ENCODE measurements at regions of chr9 and their contacts with region 1.

Region 1: GRCh38 chr9:35696525-35697215 is 6.9 kb upstream of the TPM2 start:
- DNase-seq: peak; percentile 66
- H3K4me3 Mint-ChIP-seq: no peak overlapping the region
- H3K27ac Mint-ChIP-seq: peak overlapping the region; percentile 50
- H3K4me1 Mint-ChIP-seq: peaks cover 4% of the 10 kb centered on the region
- H3K27me3 Mint-ChIP-seq: no peaks in the 10 kb centered on the region

Region 2: DNA sequence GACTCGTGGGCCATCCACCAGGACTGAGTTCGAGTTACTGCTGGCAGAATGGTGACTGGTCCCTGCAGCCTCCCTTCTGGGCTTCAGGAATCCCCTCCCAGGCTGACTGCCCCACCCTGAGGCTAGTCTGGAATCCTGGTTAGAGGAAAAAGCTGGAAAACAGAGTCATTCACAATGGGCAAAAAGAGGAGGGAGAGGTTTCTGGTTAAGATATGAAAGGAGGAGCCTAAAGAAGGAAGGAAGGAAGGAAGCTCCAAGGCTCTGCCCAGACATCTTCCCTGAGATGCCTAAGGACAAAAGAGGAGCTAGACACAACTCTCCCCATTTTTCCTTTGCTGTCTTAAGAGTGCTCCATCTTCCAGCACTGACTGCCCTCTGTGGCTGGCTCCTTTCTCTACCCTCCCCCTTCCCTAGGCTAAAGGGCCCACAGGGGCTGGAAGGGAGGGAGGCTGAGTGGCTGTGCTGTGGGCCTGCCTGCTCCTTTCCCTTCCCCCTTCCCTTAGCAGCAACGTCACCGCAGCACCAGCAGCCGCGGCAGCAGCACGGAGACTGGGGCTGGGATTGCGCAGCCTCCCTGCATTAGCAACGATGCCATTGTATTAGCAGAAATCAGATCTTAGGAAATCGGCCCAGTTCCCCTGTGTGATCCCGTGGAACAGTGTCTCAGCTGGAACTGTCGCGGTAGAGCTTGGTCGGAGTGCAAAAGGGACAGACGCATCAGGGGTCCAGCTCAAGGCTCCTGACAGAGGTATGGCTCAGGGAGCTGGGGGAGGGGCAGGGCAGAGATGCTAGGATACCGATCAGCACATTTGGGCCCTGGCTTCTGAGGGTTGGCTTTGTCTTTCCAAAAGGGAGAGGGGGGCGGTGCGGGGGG is 158.1 kb before region 1 on chr9:
- CTCF ChIA-PET with region 1: no interaction called
- DNase-seq: no peak
- H3K4me3 Mint-ChIP-seq: no peak overlapping the region
- H3K27ac Mint-ChIP-seq: no peak overlapping the region
- H3K4me1 Mint-ChIP-seq: no peaks in the 10 kb centered on the region
- H3K27me3 Mint-ChIP-seq: peaks cover 7% of the 10 kb centered on the region

Region 3: GRCh38 chr9:35616681-35617459 is 79.8 kb before region 1 on chr9:
- CTCF ChIA-PET with region 1: interaction called, 17 read pairs
- DNase-seq: peak; percentile 79
- H3K4me3 Mint-ChIP-seq: peak overlapping the region; percentile 80
- H3K27ac Mint-ChIP-seq: peak overlapping the region; percentile 79
- H3K4me1 Mint-ChIP-seq: peaks cover 49% of the 10 kb centered on the region
- H3K27me3 Mint-ChIP-seq: peaks cover 27% of the 10 kb centered on the region

Region 4: GRCh38 chr9:35657546-35658136 is 39.0 kb before region 1 on chr9 and contains the start of gene RMRP:
- CTCF ChIA-PET with region 1: interaction called, 96 read pairs
- DNase-seq: peak; percentile 91
- H3K4me3 Mint-ChIP-seq: peak within 1 kb of the TSS; percentile 81
- H3K27ac Mint-ChIP-seq: peak within 1 kb of the TSS; percentile 96
- H3K4me1 Mint-ChIP-seq: peaks cover 69% of the 10 kb centered on the region
- H3K27me3 Mint-ChIP-seq: peaks cover 18% of the 10 kb centered on the region

Region 5: DNA sequence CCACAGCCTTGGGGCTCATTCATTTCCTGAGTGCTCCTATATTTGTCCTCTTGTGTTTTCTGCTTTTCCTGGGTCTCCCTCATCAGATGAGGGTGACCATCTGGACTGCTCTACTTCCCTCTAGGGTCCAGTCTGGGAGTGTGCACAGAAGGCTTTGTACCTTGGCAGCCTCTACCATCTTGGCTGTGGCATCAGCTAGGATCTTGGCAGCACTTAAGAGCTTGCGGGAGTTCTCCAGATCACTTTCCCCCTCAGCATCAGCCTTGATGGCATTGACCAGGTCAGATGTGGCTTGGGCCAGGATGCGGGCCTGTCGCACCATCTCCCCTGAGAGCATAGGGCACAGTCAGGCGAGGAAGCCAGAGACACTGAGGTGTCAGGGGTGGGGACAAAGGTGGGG is 19.6 kb after region 1 on chr9:
- CTCF ChIA-PET with region 1: interaction called, 31 read pairs
- DNase-seq: no peak
- H3K4me3 Mint-ChIP-seq: no peak overlapping the region
- H3K27ac Mint-ChIP-seq: peak overlapping the region; percentile 47
- H3K4me1 Mint-ChIP-seq: no peaks in the 10 kb centered on the region
- H3K27me3 Mint-ChIP-seq: no peaks in the 10 kb centered on the region

Region 6: DNA sequence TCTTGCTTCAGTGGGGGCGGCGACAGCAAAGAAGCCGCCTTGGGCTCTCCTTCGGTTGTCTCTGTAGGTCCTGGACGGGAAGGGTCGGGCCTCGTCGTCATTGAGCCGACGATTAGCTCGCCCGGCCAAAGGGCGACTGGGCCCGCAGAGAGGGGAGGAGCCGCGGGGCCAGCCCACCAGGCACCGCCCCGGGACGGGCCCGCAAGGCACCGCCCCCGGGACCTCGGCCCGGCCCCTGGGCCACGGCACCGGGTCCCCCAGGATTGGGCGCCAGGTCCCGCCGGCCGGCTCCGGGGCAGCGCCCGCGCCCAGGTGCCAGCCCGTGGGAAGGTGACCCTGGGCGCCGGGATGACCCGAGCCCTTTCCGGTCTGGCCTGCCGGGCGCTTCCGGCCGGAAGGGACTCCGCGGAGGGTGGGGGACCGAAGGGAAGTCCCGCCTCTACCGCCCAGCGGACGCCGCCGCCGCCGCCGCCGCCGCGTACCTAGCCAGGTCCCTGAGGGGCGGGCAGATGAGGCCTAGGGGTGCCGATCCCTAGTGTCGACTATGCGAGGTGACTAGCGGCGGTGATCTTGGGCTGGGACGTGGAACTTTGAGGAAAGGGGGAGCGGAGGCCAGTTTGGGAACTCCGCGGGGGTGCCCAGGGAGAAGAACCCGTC is 52.3 kb after region 1 on chr9 and contains the starts of genes GBA2 and RGP1:
- CTCF ChIA-PET with region 1: interaction called, 12 read pairs
- DNase-seq: peak; percentile 81
- H3K4me3 Mint-ChIP-seq: peak within 1 kb of the TSS; percentile 90
- H3K27ac Mint-ChIP-seq: peak within 1 kb of the TSS; percentile 93
- H3K4me1 Mint-ChIP-seq: peaks cover 47% of the 10 kb centered on the region
- H3K27me3 Mint-ChIP-seq: no peaks in the 10 kb centered on the region

Region 7: DNA sequence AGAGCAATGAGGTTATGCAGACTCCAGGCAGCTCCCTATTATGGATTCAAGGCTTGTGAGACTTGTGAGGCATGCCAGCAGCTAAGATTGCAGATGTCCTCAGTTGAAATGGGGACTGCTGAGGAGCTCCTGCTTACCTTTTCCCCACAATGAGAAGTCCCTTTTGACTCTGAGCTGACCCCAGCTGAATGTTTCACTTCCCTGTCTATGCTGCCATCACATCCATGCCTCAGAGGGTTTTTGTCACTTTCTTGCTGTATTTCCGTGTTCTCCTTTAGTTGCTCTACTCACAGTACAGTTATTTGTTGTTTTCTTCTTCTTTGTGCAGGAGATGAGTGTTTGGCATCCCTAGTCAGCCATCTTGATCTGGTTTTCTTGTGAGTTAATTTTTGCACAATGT is 280.1 kb after region 1 on chr9:
- CTCF ChIA-PET with region 1: no interaction called
- DNase-seq: no peak
- H3K4me3 Mint-ChIP-seq: no peak overlapping the region
- H3K27ac Mint-ChIP-seq: no peak overlapping the region
- H3K4me1 Mint-ChIP-seq: peaks cover 9% of the 10 kb centered on the region
- H3K27me3 Mint-ChIP-seq: peaks cover 59% of the 10 kb centered on the region